ENCODE measurements at regions of chr3 and their contacts with region 1.

Region 1: DNA sequence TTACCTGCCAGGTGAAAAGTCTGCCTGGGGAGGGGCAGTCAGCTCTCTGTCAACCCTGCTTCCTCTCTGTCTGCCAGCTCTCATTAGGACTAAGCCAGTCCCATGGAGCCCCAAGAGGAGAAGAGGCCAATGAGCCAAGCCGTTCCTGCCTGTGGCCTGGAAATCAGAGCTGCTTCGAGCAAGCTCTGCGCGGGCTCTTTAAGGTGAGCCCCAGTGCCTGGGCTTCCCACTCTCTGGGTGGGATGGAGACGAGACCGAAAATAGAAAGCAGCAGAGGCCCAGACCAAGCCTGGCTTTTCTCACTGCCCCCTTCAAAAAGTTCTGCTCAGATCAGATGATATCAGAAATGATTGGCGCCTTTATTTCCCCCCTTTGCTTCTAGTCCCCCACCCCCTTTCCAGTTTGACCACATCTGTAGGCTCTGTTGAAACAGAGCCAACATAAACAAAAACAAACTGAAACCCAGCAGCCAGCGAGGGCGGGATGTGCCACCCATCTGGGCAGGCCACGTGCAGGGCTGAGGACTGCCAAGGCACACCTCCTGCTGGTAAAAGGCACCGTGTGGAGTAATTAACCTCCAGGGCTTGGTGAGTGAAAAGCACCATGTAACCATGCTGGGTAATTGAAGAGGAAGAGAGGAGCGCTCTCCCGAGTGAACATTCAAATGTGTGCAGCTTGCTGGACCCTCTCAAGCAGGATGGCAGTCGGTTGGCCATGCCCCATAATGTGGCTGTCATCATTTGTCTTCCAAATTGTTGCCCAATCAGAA is 471.0 kb upstream of the PROK2 start:
- DNase-seq: peak in 7 of 9 donors; percentile 33 to 63 (median 53)
- ATAC-seq: peak; percentile 80
- H3K4me3 ChIP-seq: no peak overlapping the region
- H3K4me3 Mint-ChIP-seq: peak overlapping the region in 9 of 10 donors; percentile 41 to 76 (median 68)
- H3K27ac ChIP-seq: no peak overlapping the region
- H3K27ac Mint-ChIP-seq: peak overlapping the region in 8 of 9 donors; percentile 32 to 90 (median 82)
- H3K4me1 ChIP-seq: peaks cover 0 to 45% of the 10 kb centered on the region in 2 donors
- H3K4me1 Mint-ChIP-seq: peaks cover 21 to 62% (median 53%) of the 10 kb centered on the region in 7 donors
- H3K27me3 ChIP-seq: no peaks in the 10 kb centered on the region
- H3K27me3 Mint-ChIP-seq: peaks cover 0 to 8% (median 0%) of the 10 kb centered on the region in 5 donors

Region 2: DNA sequence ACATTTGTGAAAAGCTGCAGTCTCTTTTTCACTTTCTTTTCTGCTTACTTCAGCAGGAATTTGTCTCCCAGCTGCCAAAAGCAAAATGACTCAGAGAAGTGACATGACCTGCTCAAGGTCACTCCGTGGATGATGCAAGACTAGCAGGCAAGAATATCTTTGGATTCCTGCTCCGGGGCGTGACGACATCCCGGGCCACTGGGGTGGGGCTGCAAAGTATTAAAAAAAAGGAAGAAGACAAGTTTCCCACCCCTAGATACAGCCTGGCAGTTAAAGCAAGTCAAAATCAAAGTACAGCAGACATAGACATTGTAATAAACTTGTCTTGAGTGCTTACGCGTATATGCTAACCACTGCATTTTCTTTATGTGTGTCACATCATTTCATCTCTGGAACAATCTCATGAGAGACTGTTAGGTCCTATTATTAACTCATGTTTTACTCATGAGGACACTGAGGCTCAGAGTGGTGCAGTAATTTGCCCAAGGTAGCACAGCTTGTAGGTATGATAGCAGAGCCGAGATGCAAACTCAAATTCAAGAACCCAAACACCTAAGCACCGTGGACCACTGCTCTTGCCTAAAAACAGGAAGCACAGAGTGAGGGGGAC is 14.2 kb after region 1 on chr3:
- CTCF ChIA-PET with region 1: no interaction called
- POLR2A ChIA-PET with region 1: interaction called, 6 read pairs
- intact Hi-C with region 1: loop called in 1 of 2 experiments (anchors 2 kb)
- DNase-seq: no peak
- ATAC-seq: peak; percentile 72
- H3K4me3 ChIP-seq: no peak overlapping the region
- H3K4me3 Mint-ChIP-seq: peak overlapping the region in 5 of 10 donors; percentile 26 to 55 (median 49)
- H3K27ac ChIP-seq: no peak overlapping the region
- H3K27ac Mint-ChIP-seq: peak overlapping the region in 6 of 9 donors; percentile 5 to 83 (median 34)
- H3K4me1 ChIP-seq: peaks cover 0 to 42% of the 10 kb centered on the region in 2 donors
- H3K4me1 Mint-ChIP-seq: peaks cover 38 to 80% (median 74%) of the 10 kb centered on the region in 7 donors
- H3K27me3 ChIP-seq: no peaks in the 10 kb centered on the region
- H3K27me3 Mint-ChIP-seq: no peaks in the 10 kb centered on the region

Region 3: DNA sequence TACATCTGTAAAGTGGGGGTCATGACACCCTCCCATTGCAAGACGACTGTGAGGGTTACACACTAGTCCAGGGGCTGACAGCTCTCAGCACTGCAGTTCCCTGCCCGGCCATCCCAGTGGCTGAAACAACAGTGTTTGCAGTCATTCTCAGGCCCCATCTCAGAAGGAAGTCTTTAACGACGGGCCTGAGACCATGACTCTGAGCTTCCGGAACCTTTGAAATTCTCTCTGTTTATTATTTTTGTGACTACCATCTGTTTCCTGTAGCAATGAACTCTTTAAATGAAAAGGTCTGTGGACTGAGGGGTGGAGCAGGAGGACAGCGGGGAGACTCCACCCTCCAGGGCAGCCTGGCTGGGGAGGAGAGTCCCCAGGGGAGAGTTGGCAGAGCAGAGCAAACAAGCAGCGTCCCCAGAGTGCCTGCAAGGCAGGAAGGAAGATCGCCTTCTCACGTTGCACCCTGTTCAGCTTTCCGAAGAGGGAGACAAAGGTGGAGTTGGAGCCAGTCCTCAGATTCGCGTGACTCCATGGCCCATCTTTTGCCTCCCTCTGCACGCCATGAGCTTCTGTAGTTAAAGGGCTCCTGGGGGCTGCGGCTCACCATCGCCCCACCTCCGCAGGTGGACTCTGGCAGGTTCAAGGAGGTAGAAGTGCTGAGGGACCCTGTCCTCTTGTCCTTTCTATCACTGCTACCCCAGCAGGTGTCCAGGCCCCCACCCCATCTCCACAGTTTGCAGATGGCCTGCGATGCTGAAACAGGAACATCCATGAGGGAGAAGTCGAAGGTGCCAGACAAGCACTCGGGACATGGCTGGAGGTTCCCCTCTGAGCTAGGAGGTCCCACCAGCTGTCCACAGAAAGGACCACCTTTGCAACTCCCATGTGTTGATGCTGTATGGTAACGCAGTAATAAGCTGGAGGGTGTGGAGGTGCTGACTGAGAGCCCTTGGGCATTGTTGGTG is 54.7 kb after region 1 on chr3:
- CTCF ChIA-PET with region 1: no interaction called
- POLR2A ChIA-PET with region 1: no interaction called
- intact Hi-C with region 1: loop called in 1 of 2 experiments (anchors 2 kb)
- DNase-seq: peak in 6 of 9 donors; percentile 19 to 34 (median 29)
- ATAC-seq: peak; percentile 85
- H3K4me3 ChIP-seq: no peak overlapping the region
- H3K4me3 Mint-ChIP-seq: peak overlapping the region; percentile 60 to 90 (median 80)
- H3K27ac ChIP-seq: peak overlapping the region; percentile 12
- H3K27ac Mint-ChIP-seq: peak overlapping the region; percentile 87 to 97 (median 93)
- H3K4me1 ChIP-seq: peaks cover 0 to 20% of the 10 kb centered on the region in 2 donors
- H3K4me1 Mint-ChIP-seq: peaks cover 7 to 40% (median 32%) of the 10 kb centered on the region in 7 donors
- H3K27me3 ChIP-seq: no peaks in the 10 kb centered on the region
- H3K27me3 Mint-ChIP-seq: no peaks in the 10 kb centered on the region

Region 4: DNA sequence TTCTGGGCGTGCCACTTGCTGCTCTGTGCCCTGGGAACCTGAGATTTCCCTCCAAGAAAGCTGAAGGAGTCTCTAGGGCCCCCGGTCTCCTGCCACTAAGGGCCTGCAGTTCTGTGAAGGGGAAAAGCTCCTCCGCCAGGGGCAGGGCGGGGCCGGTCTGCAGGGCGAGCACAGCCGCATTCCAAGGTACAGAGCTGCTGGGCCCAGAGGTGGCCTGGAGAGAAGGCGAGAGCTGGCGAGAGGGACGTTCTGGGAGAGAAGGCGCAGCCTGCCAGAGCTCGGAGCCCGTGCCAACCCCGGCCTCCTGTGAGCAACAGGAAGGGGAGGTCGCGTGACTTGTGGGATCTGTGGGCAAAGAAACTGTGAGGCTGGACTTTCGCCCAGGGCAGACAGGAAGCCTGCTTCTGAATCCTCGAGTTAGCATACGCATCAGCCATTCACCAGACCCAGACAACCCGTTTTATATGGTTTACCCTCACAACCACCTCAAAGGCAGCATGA is 91.9 kb after region 1 on chr3:
- CTCF ChIA-PET with region 1: no interaction called
- POLR2A ChIA-PET with region 1: interaction called, 3 read pairs
- intact Hi-C with region 1: loop called in 1 of 2 experiments (anchors 5 kb)
- DNase-seq: peak in 5 of 9 donors; percentile 37 to 44 (median 41)
- ATAC-seq: peak; percentile 44
- H3K4me3 ChIP-seq: no peak overlapping the region
- H3K4me3 Mint-ChIP-seq: peak overlapping the region in 7 of 10 donors; percentile 11 to 71 (median 60)
- H3K27ac ChIP-seq: peak overlapping the region; percentile 22
- H3K27ac Mint-ChIP-seq: peak overlapping the region in 8 of 9 donors; percentile 70 to 90 (median 86)
- H3K4me1 ChIP-seq: peaks cover 3 to 63% of the 10 kb centered on the region in 2 donors
- H3K4me1 Mint-ChIP-seq: peaks cover 37 to 69% (median 64%) of the 10 kb centered on the region in 7 donors
- H3K27me3 ChIP-seq: no peaks in the 10 kb centered on the region
- H3K27me3 Mint-ChIP-seq: peaks cover 0 to 12% (median 0%) of the 10 kb centered on the region in 5 donors

Region 5: GRCh38 chr3:72657666-72658065 is 401.7 kb after region 1 on chr3:
- CTCF ChIA-PET with region 1: no interaction called
- POLR2A ChIA-PET with region 1: no interaction called
- intact Hi-C with region 1: loop called in 1 of 2 experiments (anchors 10 kb)
- DNase-seq: peak in 8 of 9 donors; percentile 19 to 86 (median 75)
- ATAC-seq: peak; percentile 96
- H3K4me3 ChIP-seq: no peak overlapping the region
- H3K4me3 Mint-ChIP-seq: peak overlapping the region in 6 of 10 donors; percentile 22 to 72 (median 41)
- H3K27ac ChIP-seq: no peak overlapping the region
- H3K27ac Mint-ChIP-seq: peak overlapping the region in 2 of 9 donors; percentile 1 to 6
- H3K4me1 ChIP-seq: peaks cover 0 to 9% of the 10 kb centered on the region in 2 donors
- H3K4me1 Mint-ChIP-seq: peaks cover 12 to 38% (median 19%) of the 10 kb centered on the region in 7 donors
- H3K27me3 ChIP-seq: no peaks in the 10 kb centered on the region
- H3K27me3 Mint-ChIP-seq: peaks cover 6 to 12% (median 7%) of the 10 kb centered on the region in 5 donors